HEK293T (cell line): ENCODE measurements at regions of chr15 and their contacts with region 1.

Region 1: DNA sequence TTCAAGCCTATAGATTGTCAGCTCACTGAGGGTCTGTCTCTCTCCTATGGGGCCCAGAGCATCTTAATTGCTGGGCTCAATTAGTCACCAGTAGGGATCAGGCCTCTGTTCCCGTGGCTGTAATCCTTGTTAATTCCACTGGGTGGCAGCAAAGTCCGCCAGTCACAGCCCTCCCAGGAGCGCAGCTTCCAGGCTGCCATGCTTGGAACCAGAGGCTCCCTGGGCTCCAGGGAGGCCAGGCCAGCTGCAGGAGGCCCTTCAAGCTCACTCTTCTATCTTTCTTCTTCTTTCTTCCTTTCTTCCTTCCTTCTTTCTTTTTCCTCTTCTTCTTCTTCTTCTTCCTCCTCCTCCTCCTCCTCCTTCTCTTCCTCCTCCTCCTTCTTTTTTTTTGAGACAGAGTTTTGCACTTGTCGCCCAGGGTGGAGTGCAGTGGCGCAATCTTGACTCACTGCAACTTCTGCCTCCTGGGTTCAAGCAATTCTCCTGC is 14.4 kb downstream of the RNU5B-1 start:
- DNase-seq: peak; percentile 89

Region 2: DNA sequence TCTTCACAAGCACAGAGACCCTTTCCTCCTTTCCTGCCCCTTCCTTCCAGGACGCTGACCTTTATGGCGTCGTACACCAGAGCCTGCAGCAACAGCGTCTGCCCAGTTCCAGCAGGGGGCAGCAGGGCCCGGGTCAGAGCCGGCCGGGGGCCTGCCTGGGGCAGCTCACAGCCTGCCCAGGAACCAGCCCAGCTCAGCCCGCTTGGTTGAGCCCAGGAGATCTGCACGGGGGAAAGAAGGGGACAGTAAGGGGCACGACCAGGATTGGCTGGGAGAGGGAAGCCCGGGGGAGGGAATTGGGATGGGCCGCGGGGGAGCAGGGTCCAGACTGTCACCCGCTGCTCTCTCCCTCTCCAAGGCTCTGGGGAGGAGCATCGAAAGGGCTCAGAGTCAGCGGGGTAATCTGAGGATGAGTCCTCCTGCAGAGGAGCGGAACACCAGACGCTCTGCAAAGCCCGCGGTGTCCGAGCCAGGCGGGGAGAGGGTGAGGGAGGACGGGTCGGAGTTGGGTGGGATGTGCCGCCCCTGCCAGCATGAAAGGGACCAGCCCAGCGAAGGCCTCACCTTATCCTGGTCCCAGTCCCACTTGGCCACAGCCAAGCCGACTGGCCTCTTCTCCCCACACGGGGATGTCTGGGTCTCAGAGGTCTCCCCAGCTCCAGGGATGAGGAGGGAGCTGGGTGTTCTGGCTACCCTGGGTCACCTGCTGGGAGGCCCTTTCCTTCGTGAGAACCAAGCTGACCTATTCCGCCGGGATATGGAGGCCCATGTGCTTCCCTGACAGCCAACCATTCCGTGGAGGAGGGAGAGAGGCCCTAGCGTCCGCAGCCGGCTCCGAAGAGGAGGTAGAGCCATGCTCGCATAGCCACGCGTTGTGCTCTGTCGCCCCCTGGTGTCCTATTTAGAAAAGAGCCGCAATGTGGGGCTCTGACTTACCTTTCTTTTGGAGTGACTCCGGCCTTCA is 66.3 kb after region 1 on chr15:
- CTCF ChIA-PET with region 1: interaction called, 40 read pairs
- POLR2A ChIA-PET with region 1: interaction called, 7 read pairs
- DNase-seq: peak; percentile 92